Panc1 (cell line): ENCODE measurements at regions of chr10 and their contacts with region 1.

Region 1: GRCh38 chr10:119237722-119238436 is 30.5 kb downstream of the GRK5 start:
- DNase-seq: no peak
- ATAC-seq: 0 out of 2 replicates have a peak, but pooled peaks have one; percentile 17
- H3K4me3 ChIP-seq: peak overlapping the region in 1 of 2 experiments; percentile 7; a peak in 2 of 4 replicates
- H3K27ac ChIP-seq: peak overlapping the region; percentile 64
- H3K4me1 ChIP-seq: peaks cover 48% of the 10 kb centered on the region
- H3K27me3 ChIP-seq: no peaks in the 10 kb centered on the region
- CTCF ChIP-seq: no peak

Region 2: GRCh38 chr10:119215371-119215770 is 22.5 kb before region 1 on chr10:
- CTCF ChIA-PET with region 1: no interaction called
- POLR2A ChIA-PET with region 1: interaction called, 12 read pairs
- in situ Hi-C with region 1: no loop called
- intact Hi-C with region 1: no loop called
- DNase-seq: no peak
- ATAC-seq: no peak
- H3K4me3 ChIP-seq: no peak overlapping the region
- H3K27ac ChIP-seq: no peak overlapping the region
- H3K4me1 ChIP-seq: peaks cover 43% of the 10 kb centered on the region
- H3K27me3 ChIP-seq: no peaks in the 10 kb centered on the region
- CTCF ChIP-seq: no peak

Region 3: GRCh38 chr10:119386666-119387065 is 148.8 kb after region 1 on chr10:
- CTCF ChIA-PET with region 1: no interaction called
- POLR2A ChIA-PET with region 1: interaction called, 13 read pairs
- in situ Hi-C with region 1: no loop called
- intact Hi-C with region 1: no loop called
- DNase-seq: no peak
- ATAC-seq: no peak
- H3K4me3 ChIP-seq: no peak overlapping the region
- H3K27ac ChIP-seq: no peak overlapping the region
- H3K4me1 ChIP-seq: no peaks in the 10 kb centered on the region
- H3K27me3 ChIP-seq: no peaks in the 10 kb centered on the region
- CTCF ChIP-seq: no peak